ENCODE measurements at regions of chr17 and their contacts with region 1.

Region 1: GRCh38 chr17:63919311-63919723 is 678 bp upstream of the GH1 start:
- DNase-seq: peak; percentile 16
- H3K4me3 ChIP-seq: no peak overlapping the region
- H3K27ac ChIP-seq: no peak overlapping the region
- H3K4me1 ChIP-seq: no peaks in the 10 kb centered on the region
- H3K27me3 ChIP-seq: no peaks in the 10 kb centered on the region
- CTCF ChIP-seq: peak; percentile 76 to 90 (median 87)
- POLR2A ChIP-seq: no peak

Region 2: GRCh38 chr17:63881876-63882601 is 37.3 kb before region 1 on chr17 and contains the start of gene GH2:
- intact Hi-C with region 1: no loop called
- DNase-seq: peak; percentile 10
- H3K4me3 ChIP-seq: no peak within 1 kb of the TSS
- H3K27ac ChIP-seq: no peak within 1 kb of the TSS
- H3K4me1 ChIP-seq: no peaks in the 10 kb centered on the region
- H3K27me3 ChIP-seq: no peaks in the 10 kb centered on the region
- CTCF ChIP-seq: peak; percentile 13 to 50 (median 18)
- POLR2A ChIP-seq: no peak
- total RNA-seq, gene GH2: not detected

Region 3: DNA sequence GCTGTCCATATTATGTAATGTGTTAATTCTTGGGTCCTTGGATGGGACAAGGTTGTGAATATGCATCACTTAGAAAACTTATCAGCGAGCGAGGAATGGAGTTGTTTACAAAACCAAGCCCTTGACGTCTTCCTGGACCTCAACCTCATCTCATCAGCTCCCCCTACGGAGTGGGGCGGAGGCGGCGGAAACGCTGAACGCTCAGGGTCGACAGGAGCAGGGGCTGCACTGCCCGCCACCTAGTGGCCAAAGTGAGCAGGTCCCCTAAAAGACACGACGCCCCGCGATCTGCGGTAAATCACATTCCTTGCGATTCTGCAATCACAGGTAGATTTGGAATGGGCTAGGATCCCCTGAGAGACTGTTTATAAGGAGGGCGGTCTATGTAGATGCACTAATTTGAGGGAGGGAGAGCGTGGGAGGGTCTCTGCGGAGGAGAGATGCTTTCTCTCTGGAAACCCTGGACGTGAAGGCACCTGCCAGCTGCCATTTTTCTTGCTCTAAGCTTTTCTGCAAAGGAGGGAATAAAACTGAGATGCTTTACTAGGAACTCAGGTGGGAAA is 106.5 kb after region 1 on chr17:
- intact Hi-C with region 1: loop called (anchors 5 kb)
- DNase-seq: peak; percentile 45
- H3K4me3 ChIP-seq: no peak overlapping the region
- H3K27ac ChIP-seq: no peak overlapping the region
- H3K4me1 ChIP-seq: no peaks in the 10 kb centered on the region
- H3K27me3 ChIP-seq: no peaks in the 10 kb centered on the region
- CTCF ChIP-seq: peak; percentile 64 to 83 (median 76)
- POLR2A ChIP-seq: no peak

Measured in prostate gland (tissue), 2 donors.